Endothelial cell of umbilical vein (primary cell): ENCODE measurements at regions of chr4 and their contacts with region 1.

Region 1: GRCh38 chr4:6909073-6909965 is at the start of gene TBC1D14:
- DNase-seq: peak; percentile 85
- H3K4me3 ChIP-seq: peak within 1 kb of the TSS; percentile 65 to 80 (median 73)
- H3K27ac ChIP-seq: peak within 1 kb of the TSS; percentile 91
- H3K4me1 ChIP-seq: peaks cover 16% of the 10 kb centered on the region
- H3K27me3 ChIP-seq: peaks cover 0 to 9% of the 10 kb centered on the region in 2 experiments
- CTCF ChIP-seq: peak in 1 of 2 donors; percentile 23
- POLR2A ChIP-seq: peak; percentile 56
- total RNA-seq, gene TBC1D14: 23.3 and 24.8 TPM in 2 replicates

Region 2: DNA sequence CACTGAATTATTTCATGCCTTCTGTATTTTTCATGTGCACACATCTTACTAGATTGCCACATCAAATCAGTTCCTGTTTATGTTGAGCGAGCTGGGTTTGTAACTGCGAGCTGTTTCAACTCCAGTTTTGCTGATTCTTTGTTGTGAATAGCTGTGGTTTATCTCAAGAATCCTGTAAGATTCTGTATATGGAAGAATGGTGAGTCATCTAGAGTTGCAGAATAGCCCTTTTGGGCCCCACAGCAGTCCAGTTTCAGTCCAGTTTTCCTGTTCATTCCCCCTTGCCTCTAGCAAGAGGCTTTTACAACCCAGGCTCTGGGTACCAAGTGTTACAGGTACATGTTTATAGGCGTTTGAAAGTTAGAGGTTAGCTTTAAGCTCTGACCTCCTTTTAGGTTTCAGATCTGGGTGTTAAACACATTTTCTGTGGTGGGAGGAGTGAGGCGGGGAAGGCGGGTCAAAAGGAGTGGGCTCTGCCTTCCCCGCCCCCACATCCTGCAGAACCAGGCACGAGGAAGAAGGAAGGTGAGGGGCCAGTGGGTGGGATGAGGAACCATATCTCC is 33.0 kb after region 1 on chr4:
- CTCF ChIA-PET with region 1: interaction called, 3 read pairs
- POLR2A ChIA-PET with region 1: no interaction called
- dilution Hi-C with region 1: no loop called
- intact Hi-C with region 1: loop called (anchors 2 kb)
- DNase-seq: peak; percentile 79
- H3K4me3 ChIP-seq: no peak overlapping the region
- H3K27ac ChIP-seq: no peak overlapping the region
- H3K4me1 ChIP-seq: peaks cover 21% of the 10 kb centered on the region
- H3K27me3 ChIP-seq: no peaks in the 10 kb centered on the region
- CTCF ChIP-seq: no peak
- POLR2A ChIP-seq: no peak

Region 3: DNA sequence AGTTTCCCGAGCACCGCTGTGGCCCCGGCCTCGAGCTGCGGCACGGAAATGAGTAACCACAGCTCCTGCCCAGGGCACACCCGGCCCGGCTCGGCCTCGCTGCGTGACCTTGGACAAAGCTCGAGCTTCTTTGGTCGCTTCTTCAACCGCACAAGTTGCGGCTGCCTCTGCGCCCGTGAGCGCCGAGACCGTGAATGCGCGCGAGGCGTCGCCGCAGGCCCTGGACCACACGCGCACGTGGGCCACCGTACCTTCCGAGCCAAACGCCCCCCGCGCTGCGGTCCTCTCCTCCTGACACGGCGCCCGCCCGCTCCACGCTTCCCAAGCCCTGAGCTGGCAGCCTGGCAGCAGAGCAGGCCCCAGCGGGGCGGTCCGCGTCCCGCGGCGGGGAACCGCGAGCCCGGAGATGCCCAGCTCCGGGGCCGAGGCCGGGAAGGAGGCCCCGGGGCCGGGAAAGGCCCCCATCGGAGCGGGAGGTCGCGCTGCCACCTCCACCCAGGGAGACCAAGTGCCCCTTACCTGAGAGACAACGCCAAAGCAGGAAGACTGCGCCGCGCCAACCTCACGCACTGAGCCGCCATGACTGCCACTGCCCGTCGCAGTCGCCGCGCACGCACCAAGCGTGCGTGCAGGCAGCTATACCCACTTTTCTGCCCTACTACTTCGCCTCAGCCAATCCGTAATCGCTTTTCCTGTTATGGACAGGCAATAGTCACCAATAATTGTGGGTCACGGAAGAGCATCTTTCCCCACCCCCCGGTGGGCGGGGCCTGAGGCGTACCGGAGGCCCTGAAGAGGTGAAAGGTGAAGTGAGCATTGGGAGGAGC is 158.3 kb after region 1 on chr4 and contains the start of gene GRPEL1:
- CTCF ChIA-PET with region 1: interaction called, 5 read pairs
- POLR2A ChIA-PET with region 1: interaction called, 4 read pairs
- dilution Hi-C with region 1: no loop called
- intact Hi-C with region 1: loop called (anchors 1 kb)
- DNase-seq: peak; percentile 100
- H3K4me3 ChIP-seq: peak within 1 kb of the TSS; percentile 62 to 99 (median 71)
- H3K27ac ChIP-seq: peak within 1 kb of the TSS; percentile 57
- H3K4me1 ChIP-seq: peaks cover 20% of the 10 kb centered on the region
- H3K27me3 ChIP-seq: peaks cover 0 to 3% of the 10 kb centered on the region in 2 experiments
- CTCF ChIP-seq: no peak
- POLR2A ChIP-seq: peak; percentile 94
- total RNA-seq, gene GRPEL1: 42.6 and 47.3 TPM in 2 replicates